IMR-90 (cell line): ENCODE measurements at regions of chr1 and their contacts with region 1.

Region 1: DNA sequence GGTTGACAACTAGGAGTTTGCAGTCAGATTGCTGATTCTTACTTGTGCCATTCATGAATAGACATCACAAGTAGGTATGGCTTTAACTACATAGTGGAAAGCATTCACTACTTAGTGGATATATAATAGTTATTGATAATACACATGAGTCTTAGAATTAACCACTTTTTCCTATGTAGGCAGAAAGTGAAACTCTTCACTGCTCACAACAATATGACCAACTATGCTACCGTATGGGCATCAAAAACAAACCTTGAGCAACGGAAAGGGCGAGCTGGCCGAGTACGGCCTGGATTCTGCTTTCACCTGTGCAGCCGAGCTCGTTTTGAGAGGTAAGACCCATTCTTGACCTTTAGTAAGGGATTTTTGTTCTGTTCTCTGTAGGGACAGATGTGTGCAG is 38.7 kb downstream of the DHX9 start:
- DNase-seq: no peak
- ATAC-seq: no peak
- H3K4me3 ChIP-seq: no peak overlapping the region
- H3K27ac ChIP-seq: no peak overlapping the region
- H3K4me1 ChIP-seq: no peaks in the 10 kb centered on the region
- H3K27me3 ChIP-seq: no peaks in the 10 kb centered on the region
- CTCF ChIP-seq: no peak
- POLR2A ChIP-seq: no peak
- RAD21 ChIP-seq: no peak

Region 2: DNA sequence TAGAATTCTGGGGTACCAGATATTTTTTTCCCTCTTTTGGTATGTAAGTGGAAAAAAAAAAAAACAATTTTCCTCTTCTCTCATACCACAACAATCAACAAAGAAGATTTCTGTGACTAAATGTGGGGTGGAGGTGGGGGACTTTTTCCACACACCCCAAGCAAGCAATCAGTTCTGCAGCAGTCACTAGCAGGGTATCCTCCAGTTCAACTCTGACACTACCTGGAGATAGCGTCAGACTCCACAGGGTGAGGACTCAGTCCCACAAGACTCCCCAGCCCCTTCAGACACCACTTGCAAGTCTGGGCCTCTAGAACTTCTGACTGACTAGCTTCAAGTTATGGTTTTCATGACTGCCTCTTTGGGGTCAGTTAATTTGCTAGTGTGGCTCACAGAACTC is 32.5 kb before region 1 on chr1:
- CTCF ChIA-PET with region 1: no interaction called
- POLR2A ChIA-PET with region 1: no interaction called
- dilution Hi-C with region 1: no loop called
- in situ Hi-C with region 1: no loop called
- intact Hi-C with region 1: no loop called
- DNase-seq: no peak
- ATAC-seq: no peak
- H3K4me3 ChIP-seq: no peak overlapping the region
- H3K27ac ChIP-seq: no peak overlapping the region
- H3K4me1 ChIP-seq: peaks cover 2% of the 10 kb centered on the region; the same call in 1 of the 2 replicates
- H3K27me3 ChIP-seq: no peaks in the 10 kb centered on the region
- CTCF ChIP-seq: no peak
- POLR2A ChIP-seq: no peak
- RAD21 ChIP-seq: no peak

Region 3: DNA sequence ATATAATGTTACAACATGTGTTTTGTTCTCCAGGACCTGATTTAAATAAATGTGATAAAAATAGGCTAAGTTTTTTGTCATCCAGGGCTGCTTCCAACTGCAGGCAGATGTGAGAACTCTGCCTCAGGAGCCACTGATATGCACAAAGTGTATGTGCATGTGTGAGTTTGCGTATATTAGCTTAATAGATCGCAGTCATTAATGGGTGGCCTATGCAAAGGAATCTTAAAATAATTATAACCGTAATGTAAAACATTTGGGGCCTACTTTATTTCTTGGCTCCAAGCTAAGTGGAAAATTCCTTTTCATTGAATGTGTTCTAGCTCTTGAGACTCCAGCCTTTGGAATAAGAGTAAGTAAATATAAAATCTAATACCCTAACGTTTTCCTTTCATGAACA is 21.9 kb before region 1 on chr1:
- CTCF ChIA-PET with region 1: no interaction called
- POLR2A ChIA-PET with region 1: no interaction called
- dilution Hi-C with region 1: no loop called
- in situ Hi-C with region 1: no loop called
- intact Hi-C with region 1: loop called (anchors 2 kb)
- DNase-seq: no peak
- ATAC-seq: no peak
- H3K4me3 ChIP-seq: no peak overlapping the region
- H3K27ac ChIP-seq: no peak overlapping the region
- H3K4me1 ChIP-seq: 0 out of 2 replicates have a peak, but pooled peaks cover 2% of the 10 kb centered on the region
- H3K27me3 ChIP-seq: no peaks in the 10 kb centered on the region
- CTCF ChIP-seq: no peak
- POLR2A ChIP-seq: no peak
- RAD21 ChIP-seq: no peak